MCF 10A (cell line): ENCODE measurements at regions of chr10 and their contacts with region 1.

Region 1: GRCh38 chr10:133394064-133394663 is at the start of gene MTG1:
- DNase-seq: peak; percentile 89
- H3K4me3 Mint-ChIP-seq: peak within 1 kb of the TSS; percentile 90
- H3K27ac Mint-ChIP-seq: peak within 1 kb of the TSS; percentile 95
- H3K4me1 Mint-ChIP-seq: no peaks in the 10 kb centered on the region
- H3K27me3 Mint-ChIP-seq: no peaks in the 10 kb centered on the region
- CTCF ChIP-seq: no peak
- total RNA-seq, gene MTG1: 71.6 and 74.3 TPM in 2 replicates

Region 2: GRCh38 chr10:133143200-133143533 is 251.0 kb before region 1 on chr10:
- CTCF ChIA-PET with region 1: no interaction called
- POLR2A ChIA-PET with region 1: no interaction called
- intact Hi-C with region 1: no loop called
- DNase-seq: no peak
- H3K4me3 Mint-ChIP-seq: no peak overlapping the region
- H3K27ac Mint-ChIP-seq: no peak overlapping the region
- H3K4me1 Mint-ChIP-seq: no peaks in the 10 kb centered on the region
- H3K27me3 Mint-ChIP-seq: peaks cover 19% of the 10 kb centered on the region
- CTCF ChIP-seq: no peak

Region 3: DNA sequence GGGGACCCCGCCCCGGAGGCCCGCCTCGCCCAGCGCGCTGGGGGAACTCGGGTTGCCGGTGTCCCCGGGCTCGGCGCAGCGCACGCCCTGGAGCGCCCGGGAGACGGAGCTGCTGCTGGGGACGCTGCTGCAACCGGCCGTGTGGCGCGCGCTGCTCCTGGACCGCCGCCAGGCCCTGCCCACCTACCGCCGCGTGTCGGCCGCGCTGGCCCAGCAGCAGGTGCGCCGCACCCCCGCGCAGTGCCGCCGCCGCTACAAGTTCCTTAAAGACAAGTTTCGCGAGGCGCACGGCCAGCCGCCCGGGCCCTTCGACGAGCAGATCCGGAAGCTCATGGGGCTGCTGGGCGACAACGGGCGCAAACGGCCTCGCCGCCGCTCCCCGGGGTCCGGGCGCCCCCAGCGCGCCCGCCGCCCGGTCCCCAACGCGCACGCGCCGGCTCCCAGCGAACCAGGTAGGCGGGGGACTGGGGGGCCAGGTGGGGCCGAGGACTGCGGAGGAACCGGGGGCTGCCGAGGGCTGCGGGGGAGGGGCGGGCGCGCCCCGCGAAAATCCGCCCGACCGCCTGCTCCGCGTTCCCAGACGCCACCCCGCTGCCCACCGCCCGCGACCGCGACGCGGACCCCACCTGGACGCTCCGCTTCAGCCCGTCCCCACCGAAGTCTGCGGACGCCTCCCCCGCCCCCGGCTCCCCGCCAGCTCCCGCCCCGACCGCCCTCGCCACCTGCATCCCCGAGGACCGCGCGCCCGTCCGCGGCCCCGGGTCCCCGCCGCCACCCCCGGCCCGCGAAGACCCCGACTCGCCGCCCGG is 163.6 kb before region 1 on chr10:
- CTCF ChIA-PET with region 1: no interaction called
- POLR2A ChIA-PET with region 1: no interaction called
- intact Hi-C with region 1: no loop called
- DNase-seq: no peak
- H3K4me3 Mint-ChIP-seq: no peak overlapping the region
- H3K27ac Mint-ChIP-seq: no peak overlapping the region
- H3K4me1 Mint-ChIP-seq: no peaks in the 10 kb centered on the region
- H3K27me3 Mint-ChIP-seq: no peaks in the 10 kb centered on the region
- CTCF ChIP-seq: no peak

Region 4: GRCh38 chr10:133405844-133406527 is 11.8 kb after region 1 on chr10:
- CTCF ChIA-PET with region 1: no interaction called
- POLR2A ChIA-PET with region 1: interaction called, 11 read pairs
- intact Hi-C with region 1: no loop called
- DNase-seq: no peak
- H3K4me3 Mint-ChIP-seq: no peak overlapping the region
- H3K27ac Mint-ChIP-seq: no peak overlapping the region
- H3K4me1 Mint-ChIP-seq: peaks cover 19% of the 10 kb centered on the region
- H3K27me3 Mint-ChIP-seq: no peaks in the 10 kb centered on the region
- CTCF ChIP-seq: no peak